ENCODE measurements at regions of chr5 and their contacts with region 1.

Region 1: DNA sequence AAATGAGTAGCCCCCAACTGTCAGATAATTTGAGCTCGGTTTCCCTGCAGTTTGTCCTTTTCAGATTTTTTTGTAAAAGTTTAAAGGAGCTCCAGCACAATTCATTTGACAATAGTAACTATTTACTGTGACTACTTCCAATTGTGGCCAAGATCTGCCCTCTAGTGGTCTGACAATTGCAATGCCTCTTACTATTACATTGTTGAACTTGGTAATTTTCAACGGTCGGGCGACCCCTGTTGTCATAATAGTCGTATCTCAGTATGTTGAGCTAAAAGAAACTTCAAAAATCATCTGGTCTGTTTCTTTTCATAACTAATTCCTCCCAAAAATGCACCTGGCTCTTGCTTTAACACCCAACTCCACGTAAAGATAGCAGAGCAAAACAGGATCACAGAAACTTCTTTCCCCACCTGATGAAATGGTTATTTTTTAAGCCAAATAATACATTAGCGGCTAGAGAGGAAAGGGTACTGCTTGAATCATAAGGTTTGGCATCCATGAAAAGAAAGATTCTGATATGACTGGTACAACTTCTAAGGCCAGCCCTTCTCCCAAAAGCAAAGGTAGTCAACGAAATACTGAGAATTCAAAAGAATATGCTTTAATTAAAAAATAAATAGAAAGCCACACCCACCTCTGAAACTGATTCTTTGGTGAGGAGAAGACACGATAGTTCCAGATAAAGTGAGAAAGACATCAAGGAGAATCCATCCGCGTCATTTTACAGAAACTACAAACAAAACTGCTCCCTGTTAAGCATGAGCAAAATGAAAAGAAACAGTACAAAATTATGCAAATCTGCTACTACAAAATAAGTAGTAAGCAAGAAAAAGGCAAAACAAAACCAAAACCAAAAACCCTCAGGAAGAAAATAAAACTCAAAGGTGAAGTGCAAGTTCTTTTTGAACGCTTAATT is 76.9 kb upstream of the HTR4 start:
- DNase-seq: peak; percentile 76 to 78
- H3K4me3 ChIP-seq: no peak overlapping the region
- H3K4me3 Mint-ChIP-seq: no peak overlapping the region
- H3K27ac Mint-ChIP-seq: no peak overlapping the region
- H3K4me1 ChIP-seq: no peaks in the 10 kb centered on the region
- H3K4me1 Mint-ChIP-seq: no peaks in the 10 kb centered on the region
- H3K27me3 ChIP-seq: no peaks in the 10 kb centered on the region
- H3K27me3 Mint-ChIP-seq: peaks cover 15% of the 10 kb centered on the region
- CTCF ChIP-seq: peak; percentile 89 to 98

Region 2: DNA sequence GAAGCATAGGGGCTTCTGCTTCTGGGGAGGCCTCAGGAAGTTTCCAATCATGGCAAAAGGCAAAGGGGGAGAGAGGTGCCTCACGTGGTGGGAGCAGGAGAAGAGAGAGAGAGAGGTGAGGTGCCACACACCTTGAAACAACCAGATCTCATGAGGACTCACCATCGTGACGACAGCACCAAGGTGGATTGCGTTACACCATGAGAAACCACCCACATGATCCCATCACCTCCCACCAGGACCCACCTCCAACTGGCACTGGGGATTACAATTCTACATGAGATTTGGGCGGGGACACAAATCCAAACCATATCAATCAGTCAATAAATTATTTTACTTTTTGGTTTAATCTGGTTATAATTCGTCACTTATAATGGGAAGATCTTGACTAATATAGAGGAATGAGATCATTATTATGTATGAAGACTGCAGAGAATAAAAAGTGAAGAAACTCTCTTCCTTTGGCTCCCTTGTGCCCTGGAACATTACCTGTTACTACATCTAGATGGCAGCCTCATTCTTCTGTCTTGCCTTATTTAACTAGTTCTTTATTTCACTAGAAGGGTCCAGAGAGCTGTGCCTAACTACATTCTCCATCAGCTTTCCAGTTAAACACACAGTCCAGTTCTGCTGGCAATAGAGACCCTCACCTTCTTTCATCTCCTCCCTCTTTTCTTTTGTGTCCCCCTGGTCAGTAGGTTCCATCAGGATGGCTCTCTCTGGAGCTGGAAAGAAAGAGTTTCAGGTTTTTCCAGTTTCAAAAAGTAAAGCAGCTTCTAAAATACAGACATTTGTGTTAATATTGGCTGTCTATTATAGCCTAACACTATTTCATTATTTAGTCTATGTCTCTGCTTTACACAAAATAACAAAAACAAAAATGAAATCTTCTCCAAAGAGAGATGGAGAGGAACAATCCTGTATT is 440.7 kb before region 1 on chr5:
- CTCF ChIA-PET with region 1: interaction called, 8 read pairs
- POLR2A ChIA-PET with region 1: no interaction called
- intact Hi-C with region 1: loop called (anchors 2 kb)
- DNase-seq: peak in 1 of 2 experiments; percentile 19
- H3K4me3 ChIP-seq: no peak overlapping the region
- H3K4me3 Mint-ChIP-seq: no peak overlapping the region
- H3K27ac Mint-ChIP-seq: no peak overlapping the region
- H3K4me1 ChIP-seq: no peaks in the 10 kb centered on the region
- H3K4me1 Mint-ChIP-seq: no peaks in the 10 kb centered on the region
- H3K27me3 ChIP-seq: no peaks in the 10 kb centered on the region
- H3K27me3 Mint-ChIP-seq: peaks cover 8% of the 10 kb centered on the region
- CTCF ChIP-seq: peak; percentile 52 to 54

Region 3: GRCh38 chr5:148397968-148398597 is 333.1 kb before region 1 on chr5:
- CTCF ChIA-PET with region 1: interaction called, 18 read pairs
- POLR2A ChIA-PET with region 1: no interaction called
- intact Hi-C with region 1: no loop called
- DNase-seq: peak; percentile 64 to 75
- H3K4me3 ChIP-seq: no peak overlapping the region
- H3K4me3 Mint-ChIP-seq: peak overlapping the region; percentile 27
- H3K27ac Mint-ChIP-seq: peak overlapping the region; percentile 67
- H3K4me1 ChIP-seq: peaks cover 46% of the 10 kb centered on the region
- H3K4me1 Mint-ChIP-seq: peaks cover 35% of the 10 kb centered on the region
- H3K27me3 ChIP-seq: no peaks in the 10 kb centered on the region
- H3K27me3 Mint-ChIP-seq: no peaks in the 10 kb centered on the region
- CTCF ChIP-seq: no peak

Region 4: GRCh38 chr5:148443998-148444397 is 287.2 kb before region 1 on chr5:
- CTCF ChIA-PET with region 1: interaction called, 42 read pairs
- POLR2A ChIA-PET with region 1: no interaction called
- intact Hi-C with region 1: loop called (anchors 1 kb)
- DNase-seq: peak in 1 of 2 experiments; percentile 63
- H3K4me3 ChIP-seq: no peak overlapping the region
- H3K4me3 Mint-ChIP-seq: no peak overlapping the region
- H3K27ac Mint-ChIP-seq: no peak overlapping the region
- H3K4me1 ChIP-seq: no peaks in the 10 kb centered on the region
- H3K4me1 Mint-ChIP-seq: no peaks in the 10 kb centered on the region
- H3K27me3 ChIP-seq: no peaks in the 10 kb centered on the region
- H3K27me3 Mint-ChIP-seq: no peaks in the 10 kb centered on the region
- CTCF ChIP-seq: peak; percentile 67 to 76

Region 5: GRCh38 chr5:148719605-148720004 is 11.6 kb before region 1 on chr5:
- CTCF ChIA-PET with region 1: no interaction called
- POLR2A ChIA-PET with region 1: no interaction called
- intact Hi-C with region 1: no loop called
- DNase-seq: no peak
- H3K4me3 ChIP-seq: no peak overlapping the region
- H3K4me3 Mint-ChIP-seq: no peak overlapping the region
- H3K27ac Mint-ChIP-seq: no peak overlapping the region
- H3K4me1 ChIP-seq: no peaks in the 10 kb centered on the region
- H3K4me1 Mint-ChIP-seq: no peaks in the 10 kb centered on the region
- H3K27me3 ChIP-seq: no peaks in the 10 kb centered on the region
- H3K27me3 Mint-ChIP-seq: peaks cover 14% of the 10 kb centered on the region
- CTCF ChIP-seq: no peak

Region 6: DNA sequence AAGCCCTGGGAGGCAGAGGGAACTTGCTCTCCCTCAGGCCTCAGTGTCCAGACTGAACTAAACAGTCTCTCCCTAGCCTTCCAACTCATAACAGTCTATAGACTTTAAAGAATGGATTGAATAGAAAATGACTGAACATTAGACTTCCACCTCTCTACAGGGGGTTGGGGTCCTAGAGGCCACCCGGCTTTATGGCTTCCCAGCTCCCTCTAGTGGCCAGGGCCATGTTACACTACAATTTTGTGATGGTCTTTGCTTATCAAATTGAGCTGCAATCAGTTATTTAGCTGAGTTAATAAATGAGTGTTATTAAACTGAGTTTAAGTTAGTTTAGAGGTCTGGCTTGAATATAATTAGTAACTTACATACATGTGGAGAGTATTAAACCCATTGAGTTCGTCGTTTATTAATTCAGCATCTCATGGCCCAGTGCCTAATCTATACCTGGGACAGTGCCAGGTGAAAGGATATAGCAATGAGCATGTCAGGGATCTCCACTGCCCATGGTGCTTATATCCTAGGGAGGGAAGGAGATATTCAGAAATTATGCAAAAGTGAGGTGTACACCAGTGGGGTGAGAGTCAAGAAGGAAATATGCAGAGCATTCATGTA is 226.5 kb after region 1 on chr5:
- CTCF ChIA-PET with region 1: interaction called, 3 read pairs
- POLR2A ChIA-PET with region 1: no interaction called
- intact Hi-C with region 1: loop called (anchors 2 kb)
- DNase-seq: peak; percentile 47 to 61
- H3K4me3 ChIP-seq: no peak overlapping the region
- H3K4me3 Mint-ChIP-seq: no peak overlapping the region
- H3K27ac Mint-ChIP-seq: no peak overlapping the region
- H3K4me1 ChIP-seq: peaks cover 6% of the 10 kb centered on the region; the same call in 1 of the 2 replicates
- H3K4me1 Mint-ChIP-seq: no peaks in the 10 kb centered on the region
- H3K27me3 ChIP-seq: no peaks in the 10 kb centered on the region
- H3K27me3 Mint-ChIP-seq: peaks cover 9% of the 10 kb centered on the region
- CTCF ChIP-seq: peak; percentile 87 to 88

Region 7: GRCh38 chr5:149035372-149035790 is 304.2 kb after region 1 on chr5:
- CTCF ChIA-PET with region 1: interaction called, 24 read pairs
- POLR2A ChIA-PET with region 1: no interaction called
- intact Hi-C with region 1: loop called (anchors 1 kb)
- DNase-seq: peak; percentile 70 to 82
- H3K4me3 ChIP-seq: no peak overlapping the region
- H3K4me3 Mint-ChIP-seq: no peak overlapping the region
- H3K27ac Mint-ChIP-seq: no peak overlapping the region
- H3K4me1 ChIP-seq: no peaks in the 10 kb centered on the region
- H3K4me1 Mint-ChIP-seq: no peaks in the 10 kb centered on the region
- H3K27me3 ChIP-seq: no peaks in the 10 kb centered on the region
- H3K27me3 Mint-ChIP-seq: peaks cover 3% of the 10 kb centered on the region
- CTCF ChIP-seq: peak; percentile 75 to 94

Region 8: GRCh38 chr5:149228618-149229297 is 497.6 kb after region 1 on chr5:
- CTCF ChIA-PET with region 1: no interaction called
- POLR2A ChIA-PET with region 1: no interaction called
- intact Hi-C with region 1: loop called (anchors 1 kb)
- DNase-seq: peak in 1 of 2 experiments; percentile 16
- H3K4me3 ChIP-seq: no peak overlapping the region
- H3K4me3 Mint-ChIP-seq: no peak overlapping the region
- H3K27ac Mint-ChIP-seq: no peak overlapping the region
- H3K4me1 ChIP-seq: no peaks in the 10 kb centered on the region
- H3K4me1 Mint-ChIP-seq: peaks cover 6% of the 10 kb centered on the region
- H3K27me3 ChIP-seq: no peaks in the 10 kb centered on the region; the same call in 1 of the 2 replicates
- H3K27me3 Mint-ChIP-seq: peaks cover 22% of the 10 kb centered on the region
- CTCF ChIP-seq: peak; percentile 59 to 60

Region 9: GRCh38 chr5:149310947-149311658 is 579.9 kb after region 1 on chr5:
- CTCF ChIA-PET with region 1: no interaction called
- POLR2A ChIA-PET with region 1: no interaction called
- intact Hi-C with region 1: no loop called
- DNase-seq: no peak
- H3K4me3 ChIP-seq: no peak overlapping the region
- H3K4me3 Mint-ChIP-seq: no peak overlapping the region
- H3K27ac Mint-ChIP-seq: no peak overlapping the region
- H3K4me1 ChIP-seq: no peaks in the 10 kb centered on the region
- H3K4me1 Mint-ChIP-seq: no peaks in the 10 kb centered on the region
- H3K27me3 ChIP-seq: no peaks in the 10 kb centered on the region
- H3K27me3 Mint-ChIP-seq: peaks cover 10% of the 10 kb centered on the region
- CTCF ChIP-seq: no peak